ENCODE measurements at regions of chr11 and their contacts with region 1.

Region 1: DNA sequence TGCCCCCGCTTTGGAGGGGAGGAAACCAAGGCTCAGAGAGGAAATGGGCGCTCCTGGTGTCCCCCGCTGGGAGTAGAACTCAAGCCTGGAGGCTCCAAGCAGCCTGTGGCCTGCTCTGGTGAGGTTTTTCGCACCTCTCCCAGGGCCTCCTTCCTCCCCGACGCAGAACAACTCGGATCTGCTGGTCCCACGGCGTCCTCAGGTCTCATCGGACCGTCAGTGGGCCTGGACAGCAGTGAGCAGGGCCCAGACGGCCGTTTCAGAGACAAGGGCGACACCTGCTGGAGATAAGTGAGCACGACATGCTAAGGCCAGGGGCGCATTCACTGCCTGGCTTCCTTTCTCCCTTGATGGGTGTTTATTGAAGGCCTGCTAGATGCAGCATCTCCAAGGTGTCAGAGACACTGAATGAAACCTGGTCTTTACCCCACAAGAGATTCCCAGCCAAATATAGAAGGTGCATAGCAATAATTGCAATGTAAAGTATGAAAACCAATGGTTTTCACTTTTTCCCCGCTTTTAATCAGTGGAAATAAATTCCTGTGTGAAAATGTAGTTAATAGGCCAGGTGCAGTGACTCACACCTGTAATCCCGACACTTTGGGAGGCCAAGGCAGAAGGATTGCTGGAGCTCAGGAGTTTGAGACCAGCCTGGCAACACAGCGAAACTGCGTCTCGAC is 26.9 kb upstream of the CD82 start:
- DNase-seq: peak; percentile 81
- H3K4me3 Mint-ChIP-seq: no peak overlapping the region
- H3K27ac Mint-ChIP-seq: no peak overlapping the region
- H3K4me1 Mint-ChIP-seq: peaks cover 2% of the 10 kb centered on the region
- H3K27me3 Mint-ChIP-seq: no peaks in the 10 kb centered on the region

Region 2: DNA sequence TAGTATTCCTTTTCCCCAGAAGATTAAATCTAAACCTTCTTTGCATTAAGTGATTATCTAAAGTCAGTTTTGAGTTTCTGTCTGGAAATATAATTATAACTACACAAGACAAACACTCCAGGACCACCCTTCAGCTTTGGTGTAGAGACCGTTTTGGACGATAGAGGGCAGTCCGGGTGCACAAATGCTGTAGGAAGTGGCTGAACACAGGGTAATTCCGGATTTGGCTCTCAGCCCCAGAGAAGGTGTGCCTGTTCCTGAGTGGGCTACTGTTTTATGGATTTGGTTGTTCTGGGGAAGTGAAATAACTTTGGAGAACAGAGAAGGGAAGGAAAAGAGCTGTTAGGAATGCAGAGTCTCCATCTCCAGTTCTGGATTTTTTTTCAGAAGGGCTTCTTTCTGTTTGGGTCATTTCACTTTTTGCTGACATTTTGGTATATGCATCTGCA is 428.3 kb before region 1 on chr11:
- CTCF ChIA-PET with region 1: no interaction called
- intact Hi-C with region 1: loop called (anchors 1 kb)
- DNase-seq: peak; percentile 76
- H3K4me3 Mint-ChIP-seq: no peak overlapping the region
- H3K27ac Mint-ChIP-seq: no peak overlapping the region
- H3K4me1 Mint-ChIP-seq: peaks cover 10% of the 10 kb centered on the region
- H3K27me3 Mint-ChIP-seq: no peaks in the 10 kb centered on the region

Region 3: GRCh38 chr11:44159848-44160721 is 378.4 kb before region 1 on chr11:
- CTCF ChIA-PET with region 1: no interaction called
- intact Hi-C with region 1: no loop called
- DNase-seq: no peak
- H3K4me3 Mint-ChIP-seq: no peak overlapping the region
- H3K27ac Mint-ChIP-seq: no peak overlapping the region
- H3K4me1 Mint-ChIP-seq: peaks cover 14% of the 10 kb centered on the region
- H3K27me3 Mint-ChIP-seq: no peaks in the 10 kb centered on the region

Region 4: GRCh38 chr11:44286268-44286880 is 252.1 kb before region 1 on chr11:
- CTCF ChIA-PET with region 1: interaction called, 9 read pairs
- intact Hi-C with region 1: loop called (anchors 1 kb)
- DNase-seq: peak; percentile 77
- H3K4me3 Mint-ChIP-seq: no peak overlapping the region
- H3K27ac Mint-ChIP-seq: no peak overlapping the region
- H3K4me1 Mint-ChIP-seq: no peaks in the 10 kb centered on the region
- H3K27me3 Mint-ChIP-seq: no peaks in the 10 kb centered on the region

Region 5: DNA sequence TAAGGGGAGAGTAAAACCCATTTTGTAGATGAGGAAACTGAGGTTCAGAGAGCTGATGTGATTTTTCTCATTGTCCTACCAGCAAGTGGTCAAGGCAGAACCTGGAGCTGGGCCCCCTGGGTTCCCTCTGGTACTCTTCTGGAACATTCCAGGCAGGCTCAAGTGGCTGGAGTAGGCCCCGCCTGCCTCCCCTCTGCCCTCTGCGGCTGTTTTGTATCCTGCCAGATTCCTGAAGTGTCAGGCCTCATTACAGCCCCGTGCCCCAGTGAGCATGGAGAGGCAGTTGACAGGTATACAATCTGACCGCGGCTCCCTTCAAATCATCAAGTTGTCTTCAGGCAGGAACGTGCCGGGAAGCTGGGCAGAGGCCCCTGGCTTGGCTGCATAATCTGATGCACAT is 67.7 kb before region 1 on chr11:
- CTCF ChIA-PET with region 1: no interaction called
- intact Hi-C with region 1: loop called (anchors 10 kb)
- DNase-seq: no peak
- H3K4me3 Mint-ChIP-seq: no peak overlapping the region
- H3K27ac Mint-ChIP-seq: no peak overlapping the region
- H3K4me1 Mint-ChIP-seq: no peaks in the 10 kb centered on the region
- H3K27me3 Mint-ChIP-seq: peaks cover 14% of the 10 kb centered on the region

Region 6: DNA sequence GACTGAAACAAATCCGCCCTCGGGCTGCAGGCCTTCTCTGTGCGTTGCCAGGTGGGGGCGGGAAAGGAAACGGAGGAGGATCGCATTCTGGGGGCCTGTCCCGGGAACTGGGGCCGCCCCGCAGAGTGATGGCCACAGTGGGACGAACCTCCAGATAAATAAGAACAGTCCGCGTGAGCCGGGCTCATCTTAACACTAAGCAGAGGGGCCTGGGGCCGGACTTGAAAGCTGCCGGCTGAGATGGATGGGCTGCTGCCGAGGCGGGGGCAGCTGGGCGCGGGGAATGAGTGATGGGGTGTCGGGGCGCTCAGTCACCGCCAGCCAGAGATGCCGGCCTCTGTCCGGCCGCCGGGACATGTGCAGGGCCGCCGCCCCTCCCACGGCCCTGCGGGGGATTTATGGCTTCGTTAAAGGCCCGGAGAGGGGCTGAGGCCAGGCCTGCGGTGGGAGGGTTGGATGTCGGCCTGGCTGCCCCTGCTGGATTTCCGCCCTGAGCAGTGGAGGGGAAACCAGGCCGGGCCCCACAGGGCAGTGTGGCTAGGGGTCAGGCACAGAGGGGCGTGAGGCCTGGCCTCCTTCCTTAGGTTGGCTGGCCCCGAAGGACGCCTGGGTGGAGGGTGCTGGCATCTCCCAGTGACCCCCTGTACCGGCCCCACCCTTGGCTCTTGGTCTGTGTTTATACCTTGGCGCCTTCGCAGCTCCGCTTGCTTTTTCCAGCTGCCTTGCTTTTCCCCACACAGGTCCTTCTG is 18.4 kb before region 1 on chr11:
- CTCF ChIA-PET with region 1: interaction called, 91 read pairs
- intact Hi-C with region 1: loop called (anchors 1 kb)
- DNase-seq: no peak
- H3K4me3 Mint-ChIP-seq: no peak overlapping the region
- H3K27ac Mint-ChIP-seq: no peak overlapping the region
- H3K4me1 Mint-ChIP-seq: no peaks in the 10 kb centered on the region
- H3K27me3 Mint-ChIP-seq: peaks cover 9% of the 10 kb centered on the region

Measured in activated naive CD4-positive, alpha-beta T cell treated with anti-CD3 and anti-CD28 coated beads for 36 hours (primary cell).